Psoas muscle (tissue), 8 donors: ENCODE measurements at regions of chr13 and their contacts with region 1.

Region 1: GRCh38 chr13:27620377-27621115 is at the start of gene LNX2:
- DNase-seq: peak; percentile 99
- ATAC-seq: peak; percentile 93 to 97 (median 96)
- H3K4me3 ChIP-seq: peak within 1 kb of the TSS; percentile 96
- H3K27ac ChIP-seq: peak within 1 kb of the TSS; percentile 98
- H3K4me1 ChIP-seq: peaks cover 32% of the 10 kb centered on the region
- H3K27me3 ChIP-seq: no peaks in the 10 kb centered on the region
- CTCF ChIP-seq: no peak
- total RNA-seq, gene LNX2: 5.3 to 10.0 (median 8.0) TPM

Region 2: GRCh38 chr13:27035982-27036981 is 584.3 kb before region 1 on chr13:
- intact Hi-C with region 1: no loop called
- DNase-seq: no peak
- ATAC-seq: no peak
- H3K4me3 ChIP-seq: no peak overlapping the region
- H3K27ac ChIP-seq: no peak overlapping the region
- H3K4me1 ChIP-seq: no peaks in the 10 kb centered on the region
- H3K27me3 ChIP-seq: peaks cover 0 to 6% (median 0%) of the 10 kb centered on the region in 3 donors
- CTCF ChIP-seq: no peak

Region 3: DNA sequence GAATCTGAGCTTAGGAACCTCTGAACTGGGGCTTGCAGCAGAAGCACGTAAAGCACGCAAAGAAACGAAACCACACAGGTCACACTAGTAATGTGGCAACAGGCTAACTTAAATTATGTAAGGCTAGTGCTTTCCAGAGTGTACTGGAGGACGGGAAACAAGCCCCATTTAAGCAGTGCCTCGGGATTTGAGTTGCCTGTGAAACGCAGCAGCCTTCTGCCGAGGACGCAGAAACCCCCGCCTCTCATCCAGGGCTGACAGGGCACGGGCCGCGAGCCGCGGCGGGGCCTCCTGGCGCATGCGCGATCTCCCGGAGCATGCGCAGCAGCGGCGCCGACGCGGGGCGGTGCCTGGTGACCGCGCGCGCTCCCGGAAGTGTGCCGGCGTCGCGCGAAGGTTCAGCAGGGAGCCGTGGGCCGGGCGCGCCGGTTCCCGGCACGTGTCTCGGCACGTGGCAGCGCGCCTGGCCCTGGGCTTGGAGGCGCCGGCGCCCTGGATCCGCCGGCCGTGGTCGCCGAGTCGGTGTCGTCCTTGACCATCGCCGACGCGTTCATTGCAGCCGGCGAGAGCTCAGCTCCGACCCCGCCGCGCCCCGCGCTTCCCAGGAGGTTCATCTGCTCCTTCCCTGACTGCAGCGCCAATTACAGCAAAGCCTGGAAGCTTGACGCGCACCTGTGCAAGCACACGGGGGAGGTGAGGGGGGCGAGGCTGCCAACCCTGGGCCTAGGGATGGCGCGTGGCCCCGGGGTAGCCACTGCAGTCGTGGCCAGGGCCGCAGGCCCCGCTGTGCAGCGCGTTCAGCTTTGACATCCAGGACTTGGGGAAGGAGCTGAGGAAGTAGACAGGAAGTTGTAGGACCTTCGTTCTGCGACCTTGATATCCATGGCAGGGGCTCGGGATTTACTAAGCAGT is 196.0 kb before region 1 on chr13 and contains the start of gene GTF3A:
- intact Hi-C with region 1: loop called in 1 of 2 experiments (anchors 10 kb)
- DNase-seq: peak; percentile 89 to 93
- ATAC-seq: peak; percentile 90 to 92 (median 92)
- H3K4me3 ChIP-seq: peak within 1 kb of the TSS; percentile 93
- H3K27ac ChIP-seq: peak within 1 kb of the TSS; percentile 100
- H3K4me1 ChIP-seq: peaks cover 27% of the 10 kb centered on the region
- H3K27me3 ChIP-seq: no peaks in the 10 kb centered on the region
- CTCF ChIP-seq: no peak
- total RNA-seq, gene GTF3A: 141 to 201 (median 159) TPM

Region 4: DNA sequence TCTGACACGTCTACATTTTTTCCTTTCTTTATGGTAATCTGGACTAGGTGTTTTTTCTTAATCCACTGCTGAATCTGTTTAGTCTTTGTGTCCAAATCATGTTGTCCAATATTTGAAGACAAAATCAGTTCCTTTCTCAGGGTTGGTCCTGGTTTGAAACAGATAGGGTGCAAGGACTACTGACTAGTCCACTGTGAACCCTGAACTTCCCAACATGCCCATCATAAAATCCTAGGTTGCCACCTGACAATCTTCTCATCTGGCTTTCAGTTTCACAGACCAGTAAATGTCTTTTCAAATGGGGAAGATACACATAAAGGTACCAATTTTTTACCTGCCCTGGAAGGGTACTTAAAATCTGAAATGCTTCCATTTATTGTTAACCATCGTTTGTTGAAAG is 183.4 kb before region 1 on chr13:
- intact Hi-C with region 1: no loop called
- DNase-seq: no peak
- ATAC-seq: no peak
- H3K4me3 ChIP-seq: no peak overlapping the region
- H3K27ac ChIP-seq: no peak overlapping the region
- H3K4me1 ChIP-seq: no peaks in the 10 kb centered on the region
- H3K27me3 ChIP-seq: no peaks in the 10 kb centered on the region
- CTCF ChIP-seq: no peak

Region 5: GRCh38 chr13:27449936-27450828 is 170.4 kb before region 1 on chr13 and contains the start of gene MTIF3:
- intact Hi-C with region 1: loop called in 1 of 2 experiments (anchors 5 kb)
- DNase-seq: peak; percentile 94 to 98
- ATAC-seq: peak; percentile 92 to 95 (median 93)
- H3K4me3 ChIP-seq: peak within 1 kb of the TSS; percentile 95
- H3K27ac ChIP-seq: peak within 1 kb of the TSS; percentile 99
- H3K4me1 ChIP-seq: peaks cover 38% of the 10 kb centered on the region
- H3K27me3 ChIP-seq: no peaks in the 10 kb centered on the region
- CTCF ChIP-seq: no peak
- total RNA-seq, gene MTIF3: 48.1 to 72.4 (median 64.9) TPM

Region 6: DNA sequence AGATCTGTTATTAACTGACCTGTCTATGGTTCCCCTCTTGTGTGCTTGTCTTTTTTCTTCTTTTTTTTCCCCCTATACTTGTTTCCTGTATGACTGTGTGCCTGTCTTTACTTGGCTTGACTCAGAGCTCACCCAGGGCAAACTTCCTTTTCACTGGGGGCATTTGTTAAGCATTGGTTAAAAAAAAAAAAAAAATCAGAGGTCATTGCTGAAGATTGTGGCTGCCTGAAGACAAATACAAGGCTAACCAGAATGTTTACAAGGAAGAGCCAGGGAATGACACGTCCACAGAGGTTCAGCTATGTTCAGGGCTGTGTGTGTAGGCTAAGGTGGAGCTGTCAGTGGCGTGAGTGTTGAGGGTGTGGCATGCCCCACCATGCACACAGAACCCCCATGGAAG is 47.3 kb before region 1 on chr13:
- intact Hi-C with region 1: loop called in 1 of 2 experiments (anchors 5 kb)
- DNase-seq: no peak
- ATAC-seq: no peak
- H3K4me3 ChIP-seq: no peak overlapping the region
- H3K27ac ChIP-seq: no peak overlapping the region
- H3K4me1 ChIP-seq: peaks cover 11% of the 10 kb centered on the region
- H3K27me3 ChIP-seq: no peaks in the 10 kb centered on the region
- CTCF ChIP-seq: no peak

Region 7: GRCh38 chr13:27665333-27665732 is 44.8 kb after region 1 on chr13:
- intact Hi-C with region 1: loop called in 1 of 2 experiments (anchors 5 kb)
- DNase-seq: no peak
- ATAC-seq: no peak
- H3K4me3 ChIP-seq: no peak overlapping the region
- H3K27ac ChIP-seq: no peak overlapping the region
- H3K4me1 ChIP-seq: peaks cover 10% of the 10 kb centered on the region
- H3K27me3 ChIP-seq: no peaks in the 10 kb centered on the region
- CTCF ChIP-seq: peak; percentile 24

Region 8: DNA sequence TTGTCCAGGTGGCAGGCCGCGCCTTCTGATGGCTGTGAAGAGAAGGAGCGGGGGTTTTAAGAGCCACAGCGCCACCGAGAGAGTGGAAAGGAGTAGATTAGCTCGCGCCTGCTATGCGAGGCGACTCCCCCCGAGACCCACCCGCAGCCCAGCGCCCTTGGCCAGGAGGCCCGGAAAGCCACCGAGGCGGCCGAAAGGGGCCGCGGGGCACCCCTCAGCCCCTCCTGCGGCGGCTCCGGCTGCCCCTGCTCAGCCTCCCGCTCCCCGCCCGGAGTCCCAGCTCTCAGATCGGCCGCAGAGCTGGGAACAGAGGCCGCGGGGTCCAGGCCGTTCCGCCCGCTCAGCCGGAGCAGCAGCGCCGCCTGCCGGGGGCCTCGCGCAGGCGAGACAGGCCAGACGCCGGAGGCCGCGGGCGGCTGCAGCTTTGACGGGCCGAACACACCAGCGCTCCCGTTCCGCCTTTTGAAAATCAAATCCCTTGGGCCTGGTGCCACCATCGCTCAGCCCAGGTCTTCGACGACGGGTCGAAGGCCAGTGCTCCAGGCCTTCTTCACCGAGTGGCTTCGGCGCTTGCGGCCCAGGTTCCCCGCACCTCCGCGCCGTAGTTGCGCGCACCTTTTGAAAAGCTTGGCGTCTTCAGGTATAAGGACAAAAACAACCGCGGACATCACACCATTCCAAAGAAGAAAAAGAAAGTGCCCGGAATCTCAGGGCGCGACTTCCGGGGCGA is 333.3 kb after region 1 on chr13:
- intact Hi-C with region 1: no loop called
- DNase-seq: peak; percentile 71 to 78
- ATAC-seq: peak; percentile 84 to 90 (median 90)
- H3K4me3 ChIP-seq: peak overlapping the region; percentile 64
- H3K27ac ChIP-seq: no peak overlapping the region
- H3K4me1 ChIP-seq: peaks cover 7% of the 10 kb centered on the region
- H3K27me3 ChIP-seq: peaks cover 3 to 85% (median 19%) of the 10 kb centered on the region in 3 donors
- CTCF ChIP-seq: peak; percentile 73

Region 9: GRCh38 chr13:28697441-28697840 is 1076.9 kb after region 1 on chr13:
- intact Hi-C with region 1: no loop called
- DNase-seq: no peak
- ATAC-seq: no peak
- H3K4me3 ChIP-seq: no peak overlapping the region
- H3K27ac ChIP-seq: no peak overlapping the region
- H3K4me1 ChIP-seq: no peaks in the 10 kb centered on the region
- H3K27me3 ChIP-seq: no peaks in the 10 kb centered on the region
- CTCF ChIP-seq: no peak